Activated CD4-positive, alpha-beta memory T cell treated with anti-CD3 and anti-CD28 coated beads for 36 hours (primary cell): ENCODE measurements at regions of chr15 and their contacts with region 1.

Region 1: DNA sequence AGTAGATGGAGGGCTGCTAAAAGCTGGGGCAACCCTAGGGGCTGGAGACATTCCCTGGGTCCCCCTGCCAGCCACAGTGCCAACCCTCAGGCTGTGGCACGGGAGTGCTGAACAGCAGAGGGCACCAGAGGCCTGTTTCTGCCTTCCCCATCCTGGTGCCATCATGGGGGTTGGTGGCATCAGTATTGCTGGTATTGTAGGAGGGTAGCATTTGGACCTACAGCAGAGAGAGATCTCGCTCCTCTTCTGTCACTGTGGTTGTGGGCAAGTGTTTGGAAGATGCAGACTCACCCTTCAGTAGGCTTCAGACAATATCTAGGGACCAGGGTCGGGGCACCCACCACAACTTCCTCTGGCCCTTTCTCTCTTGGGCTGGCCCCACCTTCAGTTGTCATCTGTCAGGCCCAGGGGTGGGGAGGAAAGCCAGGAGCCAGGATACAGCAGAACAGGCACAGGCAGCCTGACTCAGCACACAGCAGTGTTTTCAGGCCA is 123.5 kb downstream of the RPLP1 start:
- DNase-seq: peak; percentile 82
- H3K4me3 Mint-ChIP-seq: no peak overlapping the region
- H3K27ac Mint-ChIP-seq: no peak overlapping the region
- H3K4me1 Mint-ChIP-seq: peaks cover 37% of the 10 kb centered on the region
- H3K27me3 Mint-ChIP-seq: no peaks in the 10 kb centered on the region

Region 2: GRCh38 chr15:69475769-69476358 is 100.2 kb before region 1 on chr15:
- CTCF ChIA-PET with region 1: interaction called, 4 read pairs
- POLR2A ChIA-PET with region 1: no interaction called
- intact Hi-C with region 1: loop called (anchors 5 kb)
- DNase-seq: peak; percentile 83
- H3K4me3 Mint-ChIP-seq: no peak overlapping the region
- H3K27ac Mint-ChIP-seq: no peak overlapping the region
- H3K4me1 Mint-ChIP-seq: no peaks in the 10 kb centered on the region
- H3K27me3 Mint-ChIP-seq: peaks cover 4% of the 10 kb centered on the region

Region 3: GRCh38 chr15:69557340-69558137 is 18.5 kb before region 1 on chr15:
- CTCF ChIA-PET with region 1: no interaction called
- POLR2A ChIA-PET with region 1: no interaction called
- intact Hi-C with region 1: no loop called
- DNase-seq: no peak
- H3K4me3 Mint-ChIP-seq: no peak overlapping the region
- H3K27ac Mint-ChIP-seq: no peak overlapping the region
- H3K4me1 Mint-ChIP-seq: no peaks in the 10 kb centered on the region
- H3K27me3 Mint-ChIP-seq: no peaks in the 10 kb centered on the region

Region 4: DNA sequence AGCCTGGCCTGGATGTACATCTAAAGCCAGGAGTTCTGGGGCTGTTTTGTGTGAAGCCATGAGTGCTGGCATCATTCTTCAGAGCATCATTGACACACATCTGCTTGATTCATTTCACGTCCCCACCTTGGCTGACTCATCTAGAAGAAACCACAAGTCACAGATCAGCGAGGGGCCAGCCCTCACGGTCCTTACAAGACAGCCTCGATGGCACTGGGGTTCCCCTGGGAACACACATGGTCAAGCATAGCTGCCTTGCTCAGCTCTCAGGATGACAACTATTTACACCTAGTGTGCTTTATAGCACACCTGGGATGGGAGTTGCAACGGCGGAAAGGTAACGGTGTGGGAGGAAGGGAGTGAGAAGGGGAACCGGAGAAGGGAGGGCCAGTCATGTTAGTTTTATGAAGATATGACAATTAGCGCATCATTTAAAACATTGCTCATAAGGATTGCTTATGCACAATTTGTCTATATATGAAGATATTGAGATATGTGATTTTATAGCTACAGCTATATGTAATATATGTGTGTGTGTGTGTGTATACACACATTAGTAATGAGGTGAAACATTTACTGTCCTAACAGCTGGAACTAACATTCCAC is 103.6 kb after region 1 on chr15:
- CTCF ChIA-PET with region 1: no interaction called
- POLR2A ChIA-PET with region 1: no interaction called
- intact Hi-C with region 1: loop called (anchors 1 kb)
- DNase-seq: peak; percentile 86
- H3K4me3 Mint-ChIP-seq: peak overlapping the region; percentile 34
- H3K27ac Mint-ChIP-seq: peak overlapping the region; percentile 28
- H3K4me1 Mint-ChIP-seq: peaks cover 23% of the 10 kb centered on the region
- H3K27me3 Mint-ChIP-seq: peaks cover 9% of the 10 kb centered on the region

Region 5: GRCh38 chr15:69719527-69720240 is 143.6 kb after region 1 on chr15:
- CTCF ChIA-PET with region 1: interaction called, 7 read pairs
- POLR2A ChIA-PET with region 1: no interaction called
- intact Hi-C with region 1: loop called (anchors 1 kb)
- DNase-seq: peak; percentile 83
- H3K4me3 Mint-ChIP-seq: no peak overlapping the region
- H3K27ac Mint-ChIP-seq: peak overlapping the region; percentile 87
- H3K4me1 Mint-ChIP-seq: peaks cover 84% of the 10 kb centered on the region
- H3K27me3 Mint-ChIP-seq: peaks cover 3% of the 10 kb centered on the region

Region 6: DNA sequence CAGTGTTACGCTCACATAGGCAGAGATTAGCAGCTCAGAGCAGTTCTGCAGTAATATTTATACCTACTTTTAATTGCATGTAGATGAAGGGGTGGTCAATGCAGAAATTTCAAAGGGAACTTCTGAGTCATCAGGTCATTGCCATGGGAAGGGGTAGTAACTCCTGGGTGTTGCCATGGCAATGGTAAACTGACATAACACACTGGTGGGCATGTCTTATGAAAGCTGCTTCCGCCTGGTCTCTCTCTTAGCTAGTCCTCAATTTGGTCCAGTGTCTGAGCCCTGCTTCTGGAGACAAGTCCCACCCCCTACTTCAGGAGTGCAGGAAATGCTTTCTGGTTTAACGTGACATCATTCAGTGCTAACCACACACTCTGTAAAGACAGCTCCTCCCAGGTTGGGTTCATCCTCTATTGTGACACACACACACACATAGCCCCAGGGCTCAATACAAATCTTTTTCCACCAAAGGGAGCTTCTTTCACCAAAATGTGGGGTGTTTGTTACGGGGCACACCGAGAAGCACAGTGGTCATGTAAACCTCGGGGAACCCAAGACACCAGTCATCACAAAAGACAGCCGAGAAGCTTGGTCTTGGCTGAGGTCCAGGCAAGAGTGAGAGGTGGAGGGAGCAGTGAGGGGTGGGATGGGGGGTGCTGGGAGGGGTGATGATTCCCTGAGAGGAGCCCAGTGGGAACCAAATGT is 447.1 kb after region 1 on chr15:
- CTCF ChIA-PET with region 1: interaction called, 3 read pairs
- POLR2A ChIA-PET with region 1: no interaction called
- intact Hi-C with region 1: loop called (anchors 10 kb)
- DNase-seq: peak; percentile 64
- H3K4me3 Mint-ChIP-seq: peak overlapping the region; percentile 24
- H3K27ac Mint-ChIP-seq: peak overlapping the region; percentile 63
- H3K4me1 Mint-ChIP-seq: peaks cover 19% of the 10 kb centered on the region
- H3K27me3 Mint-ChIP-seq: no peaks in the 10 kb centered on the region